ENCODE measurements at regions of chr19 and their contacts with region 1.

Region 1: DNA sequence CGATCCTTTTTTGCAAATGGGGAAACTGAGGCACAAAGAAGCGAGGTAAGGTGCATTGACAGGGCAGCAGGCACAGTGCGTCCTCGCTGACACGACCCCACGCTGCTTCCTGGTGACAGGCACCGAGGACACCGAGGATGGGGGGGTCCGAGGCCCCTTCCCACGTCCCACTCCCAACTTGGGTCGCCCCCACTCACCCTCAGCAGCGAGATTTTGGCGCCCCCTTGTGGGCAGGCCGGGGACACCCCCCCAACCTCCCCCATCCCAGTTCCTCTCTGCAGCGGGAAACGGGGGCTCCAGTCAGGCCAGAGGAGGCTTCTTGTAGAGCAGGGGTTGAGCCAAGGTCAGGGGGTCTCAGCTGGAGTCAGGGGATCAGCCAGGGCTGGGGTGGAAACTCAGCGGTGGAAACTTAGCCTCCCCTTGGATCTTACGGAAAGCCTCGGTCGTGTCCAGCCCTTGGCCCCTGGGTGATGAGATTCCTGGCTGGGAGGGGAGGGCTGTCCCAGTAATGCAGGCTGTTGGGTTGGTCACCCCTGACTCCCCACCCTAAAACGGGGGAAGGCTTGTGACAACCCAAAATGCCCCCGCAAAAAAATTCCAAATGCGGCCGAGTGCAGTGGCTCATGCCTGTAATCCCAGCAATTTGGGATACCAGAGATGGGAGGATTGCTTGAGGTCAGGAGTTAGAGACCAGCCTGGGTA is 8.2 kb downstream of the SMIM24 start:
- H3K4me3 ChIP-seq: no peak overlapping the region
- H3K27ac ChIP-seq: no peak overlapping the region
- H3K4me1 ChIP-seq: no peaks in the 10 kb centered on the region
- CTCF ChIP-seq: peak; percentile 79

Region 2: GRCh38 chr19:3316659-3317207 is 155.4 kb before region 1 on chr19:
- CTCF ChIA-PET with region 1: interaction called, 11 read pairs
- POLR2A ChIA-PET with region 1: no interaction called
- H3K4me3 ChIP-seq: no peak overlapping the region
- H3K27ac ChIP-seq: no peak overlapping the region
- H3K4me1 ChIP-seq: no peaks in the 10 kb centered on the region
- CTCF ChIP-seq: no peak